ENCODE measurements at regions of chr17 and their contacts with region 1.

Region 1: DNA sequence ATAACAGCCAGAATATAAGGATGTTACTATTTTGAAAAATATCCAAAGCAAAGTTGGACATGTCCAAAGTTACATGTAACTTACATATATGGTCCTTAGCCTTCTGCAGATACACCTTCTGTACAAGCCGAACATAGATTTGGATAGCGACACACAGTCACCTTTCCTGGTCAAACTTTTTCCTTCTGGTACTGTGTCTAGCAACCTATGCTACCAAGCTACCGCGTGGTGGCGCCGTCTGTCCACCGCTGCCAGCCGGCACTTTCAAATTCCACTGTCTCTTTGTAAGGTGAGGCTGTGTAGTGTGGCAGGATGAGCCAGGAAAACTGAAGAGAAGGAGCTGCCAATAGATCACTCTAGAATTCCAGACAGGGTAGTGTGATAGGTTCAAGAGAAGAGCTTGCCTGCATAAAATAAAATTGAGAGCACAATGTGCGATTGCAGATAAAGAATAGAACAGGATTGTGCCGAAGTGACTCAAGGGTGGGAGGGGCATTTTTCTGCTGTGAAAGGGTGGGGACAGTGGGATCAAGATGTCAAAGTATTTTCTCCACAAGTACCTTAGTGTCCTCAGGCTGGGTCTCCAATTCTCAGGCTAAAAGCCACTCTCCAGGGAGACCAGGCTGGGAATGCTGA is 366.9 kb downstream of the SLC39A11 start:
- DNase-seq: peak; percentile 58
- CTCF ChIP-seq: peak; percentile 86

Region 2: DNA sequence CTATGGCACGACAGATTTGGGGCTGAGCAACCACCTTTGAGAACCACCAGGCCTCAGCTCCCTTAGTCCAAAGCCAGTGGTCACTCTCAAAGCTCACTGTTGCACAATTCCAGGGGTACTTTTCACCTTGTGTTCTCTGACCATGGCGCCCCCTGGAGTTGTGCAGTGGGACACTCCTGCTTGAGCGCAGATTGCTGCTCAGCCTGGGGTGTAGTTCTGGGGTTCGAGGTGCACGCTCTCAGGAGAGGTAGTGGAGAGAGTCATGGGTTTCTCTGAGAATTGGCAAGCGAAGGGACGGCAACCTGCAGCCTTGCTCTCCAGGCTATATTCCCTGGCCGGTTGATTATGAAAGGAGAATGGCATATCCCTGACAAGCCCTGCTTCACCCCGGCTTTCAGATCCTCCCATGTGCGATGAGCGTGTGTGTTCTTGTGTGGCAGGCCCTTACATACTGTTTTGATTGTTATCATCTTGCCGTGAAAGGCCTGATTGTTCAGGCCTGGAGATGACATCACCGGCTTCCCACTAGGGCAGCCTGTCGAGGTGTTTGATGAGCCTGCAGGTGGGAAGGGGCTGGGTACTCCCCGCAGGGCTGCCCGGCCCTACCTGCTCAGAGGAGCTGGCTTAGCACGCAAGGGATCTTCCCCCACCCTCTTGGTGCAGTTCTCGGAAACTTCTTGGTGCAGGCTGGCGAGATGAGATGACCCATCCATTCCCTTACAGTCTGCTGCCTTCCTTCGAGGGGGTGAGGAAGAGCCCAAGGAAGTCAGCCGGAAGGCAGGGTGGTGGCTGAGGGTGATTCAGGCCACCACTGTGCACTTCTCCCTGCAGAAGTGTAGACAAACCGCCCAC is 64.2 kb before region 1 on chr17:
- CTCF ChIA-PET with region 1: no interaction called
- POLR2A ChIA-PET with region 1: no interaction called
- DNase-seq: no peak
- CTCF ChIP-seq: no peak

Region 3: GRCh38 chr17:72684405-72685020 is 41.0 kb before region 1 on chr17:
- CTCF ChIA-PET with region 1: interaction called, 12 read pairs
- POLR2A ChIA-PET with region 1: no interaction called
- DNase-seq: no peak
- CTCF ChIP-seq: no peak

Region 4: DNA sequence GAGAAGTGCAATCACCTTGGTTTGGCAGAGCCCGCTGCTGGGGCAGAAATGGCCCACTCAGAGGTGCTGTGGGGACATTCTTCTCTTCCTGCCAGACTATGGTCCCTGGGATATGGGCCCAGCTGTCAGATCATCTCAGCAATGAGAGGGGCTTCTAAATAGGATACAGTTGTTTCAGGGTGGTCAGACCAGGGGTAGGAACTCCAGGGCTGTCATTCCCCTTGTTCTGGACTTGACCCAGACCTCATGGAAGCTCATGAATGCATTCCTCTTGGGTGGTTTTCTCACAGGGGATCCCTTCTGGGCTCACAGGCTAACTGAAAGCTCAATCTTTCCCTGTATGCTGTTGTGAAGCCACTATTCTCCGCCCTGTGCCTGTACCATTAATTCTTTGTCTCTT is 19.7 kb after region 1 on chr17:
- CTCF ChIA-PET with region 1: interaction called, 26 read pairs
- POLR2A ChIA-PET with region 1: no interaction called
- DNase-seq: no peak
- CTCF ChIP-seq: no peak

Region 5: DNA sequence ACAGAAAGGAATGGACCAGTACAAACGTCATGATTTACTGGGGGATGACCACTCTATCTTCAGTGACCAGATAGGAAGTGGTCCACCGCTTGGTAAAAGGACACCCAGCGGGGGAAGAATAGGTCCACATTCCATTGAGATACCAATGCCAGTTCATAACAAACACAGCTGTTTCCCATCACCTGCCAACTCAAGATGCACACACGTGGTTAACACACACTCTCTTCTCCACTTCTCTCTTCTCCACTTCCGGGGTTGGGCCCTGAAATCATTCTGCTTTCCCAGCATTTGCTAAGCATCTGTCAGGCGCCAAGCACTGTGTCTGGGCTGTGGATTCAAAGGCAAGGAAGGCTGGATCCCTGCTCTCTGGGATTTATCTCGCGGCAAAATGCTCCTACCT is 191.4 kb after region 1 on chr17:
- CTCF ChIA-PET with region 1: no interaction called
- POLR2A ChIA-PET with region 1: no interaction called
- DNase-seq: no peak
- CTCF ChIP-seq: no peak

Region 6: DNA sequence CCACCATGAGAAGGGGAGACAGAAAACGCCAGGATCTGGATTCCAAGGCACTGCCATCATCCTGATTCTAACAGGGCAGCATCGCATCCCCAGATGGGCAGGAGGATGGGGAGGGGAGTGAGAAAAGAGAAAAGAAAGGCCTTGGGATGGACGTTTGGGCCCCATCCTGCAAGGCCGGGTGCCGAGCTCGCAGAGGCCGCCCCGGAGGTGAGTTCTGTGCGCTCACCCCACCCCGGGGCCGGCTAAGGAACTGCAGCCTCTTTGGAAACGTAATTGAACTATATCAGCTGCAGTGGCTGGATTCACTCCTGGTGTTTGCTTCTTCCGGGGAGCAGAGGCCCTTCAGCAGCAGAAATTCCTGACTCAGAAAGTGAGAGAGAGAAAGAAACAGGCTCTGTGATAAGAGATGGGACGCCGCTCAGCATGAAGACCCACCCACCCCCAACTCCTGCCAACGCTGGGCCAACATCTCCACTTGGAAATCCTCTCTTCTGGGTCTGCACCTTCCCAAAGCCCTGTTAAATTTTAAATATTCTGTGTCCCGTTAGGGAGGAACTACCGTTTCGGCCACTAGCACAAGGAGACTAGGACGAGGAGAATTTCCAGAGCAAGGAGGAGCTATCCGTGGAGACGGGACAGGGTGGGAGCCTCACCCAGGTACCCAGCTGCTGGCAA is 430.8 kb after region 1 on chr17:
- CTCF ChIA-PET with region 1: interaction called, 26 read pairs
- POLR2A ChIA-PET with region 1: no interaction called
- DNase-seq: peak; percentile 81
- CTCF ChIP-seq: peak; percentile 83

Region 7: GRCh38 chr17:73192894-73193701 is 467.5 kb after region 1 on chr17 and contains the start of gene COG1:
- CTCF ChIA-PET with region 1: interaction called, 90 read pairs
- POLR2A ChIA-PET with region 1: no interaction called
- DNase-seq: peak; percentile 96
- CTCF ChIP-seq: no peak

Region 8: GRCh38 chr17:73255671-73256181 is 530.2 kb after region 1 on chr17:
- CTCF ChIA-PET with region 1: interaction called, 11 read pairs
- POLR2A ChIA-PET with region 1: no interaction called
- DNase-seq: peak; percentile 69
- CTCF ChIP-seq: peak; percentile 96